Heart left ventricle (tissue), 16 donors: ENCODE measurements at regions of chr22 and their contacts with region 1.

Region 1: DNA sequence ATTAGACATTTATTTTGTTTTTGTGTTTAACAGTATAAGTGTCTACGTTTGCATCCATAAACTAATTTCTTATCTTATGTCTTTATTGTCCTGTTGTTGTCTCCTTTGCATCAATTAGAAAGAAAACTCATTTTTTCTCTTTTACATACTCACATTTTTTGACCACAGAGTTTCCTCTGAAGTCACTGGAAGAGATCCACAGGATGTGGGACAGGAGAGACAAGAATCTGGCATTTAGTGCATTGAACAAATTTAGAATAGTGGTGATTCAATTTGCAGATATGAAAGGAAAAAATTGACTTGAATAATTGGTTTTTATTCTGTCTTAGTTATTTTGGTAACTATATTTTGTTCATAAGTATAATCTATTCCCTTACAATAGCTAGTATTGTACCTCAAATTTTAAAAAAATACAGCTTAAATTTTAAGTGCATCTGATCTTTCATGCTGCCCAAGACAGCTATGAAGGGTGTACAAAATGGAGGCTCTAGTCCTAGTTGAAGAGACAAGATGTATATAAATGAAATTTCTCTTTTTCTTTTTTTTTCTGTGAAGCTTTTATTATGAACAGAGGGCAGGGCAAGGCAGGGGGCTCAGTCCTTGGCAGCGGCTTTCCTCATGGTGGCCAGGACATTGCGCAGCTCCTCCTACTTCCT is 24.4 kb downstream of the HORMAD2 start:
- DNase-seq: no peak
- ATAC-seq: no peak
- H3K4me3 ChIP-seq: no peak overlapping the region
- H3K27ac ChIP-seq: no peak overlapping the region
- H3K4me1 ChIP-seq: no peaks in the 10 kb centered on the region
- H3K27me3 ChIP-seq: peaks cover 0 to 22% (median 0%) of the 10 kb centered on the region in 9 donors
- CTCF ChIP-seq: no peak
- POLR2A ChIP-seq: no peak

Region 2: DNA sequence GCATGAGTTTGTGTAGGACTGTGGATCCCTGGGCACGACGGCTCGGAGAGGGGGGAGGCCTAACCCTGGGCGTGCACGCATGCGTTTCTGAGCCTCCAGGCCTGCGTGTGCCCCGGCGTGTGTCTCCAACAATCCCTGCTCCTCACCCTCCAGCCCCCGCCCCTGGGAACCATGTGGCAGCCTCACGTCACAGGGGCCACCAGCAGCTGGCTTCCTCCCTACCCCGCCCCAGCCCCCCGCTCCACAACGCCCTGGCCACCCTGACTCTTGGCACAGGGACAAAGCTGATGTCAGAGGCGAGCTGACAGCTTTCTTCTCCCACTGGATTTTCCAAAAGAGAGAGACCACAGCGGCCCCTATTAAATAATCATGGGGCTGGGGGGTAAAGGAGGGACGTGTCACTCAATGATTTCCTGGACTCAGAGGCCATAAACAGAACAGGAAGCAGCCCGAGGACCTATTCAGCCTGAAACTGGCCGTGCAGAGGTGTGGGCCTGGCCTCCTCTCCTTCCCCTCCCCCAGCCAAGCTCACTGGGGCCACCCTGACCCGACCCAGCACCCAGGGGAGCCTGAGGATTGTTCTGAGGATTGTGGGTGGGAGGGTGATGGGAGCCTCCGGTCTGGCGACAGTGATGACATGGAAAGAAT is 148.7 kb after region 1 on chr22:
- intact Hi-C with region 1: loop called in 6 of 10 experiments (anchors 1 to 2 kb)
- DNase-seq: peak; percentile 71 to 88 (median 81)
- ATAC-seq: peak in 3 of 4 donors; percentile 9 to 57 (median 44)
- H3K4me3 ChIP-seq: peak overlapping the region in 1 of 12 donors; percentile 2
- H3K27ac ChIP-seq: peak overlapping the region in 6 of 12 donors; percentile 10 to 70 (median 39)
- H3K4me1 ChIP-seq: peaks cover 0 to 52% (median 17%) of the 10 kb centered on the region in 12 donors
- H3K27me3 ChIP-seq: peaks cover 0 to 20% (median 4%) of the 10 kb centered on the region in 9 donors
- CTCF ChIP-seq: no peak
- POLR2A ChIP-seq: no peak

Region 3: DNA sequence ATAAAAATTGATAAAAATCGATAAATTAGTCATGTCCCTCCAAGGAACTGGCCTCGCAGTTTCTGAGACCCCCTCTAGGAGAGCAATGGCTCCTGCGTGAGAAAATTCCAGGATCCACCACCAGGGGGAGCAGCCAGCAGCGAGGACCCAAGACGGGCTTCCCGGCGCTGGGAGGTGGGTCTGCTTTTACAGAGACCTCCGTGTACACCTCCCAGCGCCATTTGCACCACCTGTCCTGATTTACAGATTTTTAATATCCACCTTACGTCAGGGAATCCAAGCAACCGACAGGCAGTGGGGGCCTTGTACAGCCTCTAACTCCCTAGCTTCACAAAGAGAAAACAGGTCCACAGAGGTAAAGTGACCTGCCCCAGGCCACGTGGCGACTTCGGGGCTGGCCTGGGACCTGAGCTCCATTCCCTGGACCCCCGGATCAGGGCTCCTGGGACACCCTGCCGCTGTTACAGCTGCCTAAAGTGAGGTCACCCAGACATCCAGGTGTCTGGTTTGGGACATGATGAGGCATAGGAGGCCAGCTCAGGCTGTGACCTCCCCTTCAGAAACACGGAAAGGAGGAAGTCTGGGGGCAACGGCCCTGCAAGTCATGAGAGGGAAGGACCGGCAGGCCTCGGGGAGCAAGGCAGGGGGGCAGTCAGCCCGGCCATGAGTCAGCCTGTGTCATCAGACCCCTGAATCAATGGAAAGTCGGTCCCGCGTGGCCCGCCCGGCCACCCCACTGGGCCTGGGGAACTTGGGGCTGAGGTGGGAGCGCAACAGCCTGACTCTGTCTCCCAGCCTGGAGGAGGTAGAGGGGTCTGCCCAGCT is 158.5 kb after region 1 on chr22:
- intact Hi-C with region 1: loop called in 1 of 10 experiments (anchors 2 kb)
- DNase-seq: peak; percentile 68 to 87 (median 72)
- ATAC-seq: peak in 2 of 4 donors; percentile 49 to 53
- H3K4me3 ChIP-seq: peak overlapping the region in 6 of 12 donors; percentile 3 to 32 (median 11)
- H3K27ac ChIP-seq: peak overlapping the region in 1 of 12 donors; percentile 32
- H3K4me1 ChIP-seq: peaks cover 0 to 43% (median 0%) of the 10 kb centered on the region in 12 donors
- H3K27me3 ChIP-seq: peaks cover 0 to 12% (median 0%) of the 10 kb centered on the region in 9 donors
- CTCF ChIP-seq: peak; percentile 89 to 99 (median 97)
- POLR2A ChIP-seq: no peak

Region 4: DNA sequence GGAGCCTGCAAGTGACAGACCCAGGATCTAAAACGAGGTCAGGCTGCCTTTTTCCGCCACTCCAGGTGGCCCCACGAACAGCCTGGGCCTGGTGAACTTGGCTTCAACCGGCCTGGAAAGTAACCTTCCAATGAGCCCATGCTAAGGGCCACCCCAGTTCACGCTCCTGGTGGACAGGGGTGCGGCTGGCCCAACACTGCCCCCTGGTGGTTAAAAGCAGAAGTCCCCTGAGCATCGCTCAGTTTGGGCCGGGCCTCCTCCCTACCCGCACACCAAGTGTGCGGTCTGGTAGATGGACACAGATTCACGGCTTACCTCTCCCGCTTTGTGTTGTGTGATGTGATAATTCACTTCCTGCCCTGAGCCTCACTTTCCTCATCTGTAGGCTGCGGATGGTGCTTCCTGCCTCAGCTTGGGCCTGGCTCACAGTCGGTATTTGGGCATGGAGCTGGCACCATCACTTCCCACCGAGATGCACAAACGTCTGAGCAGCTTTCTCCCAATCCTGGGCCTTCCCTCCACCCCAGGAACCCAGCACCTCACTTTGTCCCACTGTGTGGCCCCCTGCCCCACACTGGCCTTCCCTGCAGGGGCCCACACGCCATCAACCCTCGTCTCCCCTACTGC is 380.8 kb after region 1 on chr22:
- intact Hi-C with region 1: loop called in 2 of 10 experiments (anchors 5 kb)
- DNase-seq: peak; percentile 34 to 74 (median 60)
- ATAC-seq: peak in 3 of 4 donors; percentile 83 to 96 (median 87)
- H3K4me3 ChIP-seq: no peak overlapping the region
- H3K27ac ChIP-seq: no peak overlapping the region
- H3K4me1 ChIP-seq: no peaks in the 10 kb centered on the region
- H3K27me3 ChIP-seq: peaks cover 0 to 9% (median 0%) of the 10 kb centered on the region in 9 donors
- CTCF ChIP-seq: peak; percentile 85 to 99 (median 94)
- POLR2A ChIP-seq: no peak